ENCODE measurements at regions of chr10 and their contacts with region 1.

Region 1: GRCh38 chr10:71349401-71350110 is 30.5 kb downstream of the SLC29A3 start:
- DNase-seq: no peak
- H3K4me3 ChIP-seq: no peak overlapping the region
- H3K27ac ChIP-seq: no peak overlapping the region
- H3K4me1 ChIP-seq: no peaks in the 10 kb centered on the region
- H3K27me3 ChIP-seq: no peaks in the 10 kb centered on the region
- CTCF ChIP-seq: no peak
- EP300 ChIP-seq: no peak
- POLR2A ChIP-seq: no peak

Region 2: DNA sequence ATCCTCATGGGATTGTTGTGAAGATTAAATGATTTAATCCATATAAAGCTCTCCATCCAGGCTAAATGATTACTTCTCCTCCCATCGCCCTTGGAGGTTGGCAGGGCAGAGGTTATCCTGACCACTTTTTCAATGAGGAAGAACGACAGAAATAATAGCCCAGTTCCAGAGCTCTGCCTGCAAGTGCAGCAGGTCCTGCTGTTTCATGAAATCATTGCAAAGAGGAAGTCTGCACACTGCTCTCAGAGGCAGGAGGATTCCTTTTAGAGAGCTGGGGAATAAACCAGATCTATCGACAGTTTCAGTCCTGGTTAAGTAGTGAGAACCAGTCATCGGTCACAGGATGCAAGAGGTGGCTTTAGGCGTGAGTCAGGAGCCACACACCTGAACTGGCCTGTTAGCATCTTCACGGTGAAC is 22.2 kb after region 1 on chr10:
- intact Hi-C with region 1: loop called in 1 of 4 experiments (anchors 2 kb)
- DNase-seq: no peak
- H3K4me3 ChIP-seq: no peak overlapping the region
- H3K27ac ChIP-seq: no peak overlapping the region
- H3K4me1 ChIP-seq: peaks cover under 1% of the 10 kb centered on the region
- H3K27me3 ChIP-seq: no peaks in the 10 kb centered on the region
- CTCF ChIP-seq: no peak
- EP300 ChIP-seq: no peak
- POLR2A ChIP-seq: no peak

Region 3: GRCh38 chr10:71647526-71648253 is 298.1 kb after region 1 on chr10:
- intact Hi-C with region 1: no loop called
- DNase-seq: no peak
- H3K4me3 ChIP-seq: no peak overlapping the region
- H3K27ac ChIP-seq: no peak overlapping the region
- H3K4me1 ChIP-seq: no peaks in the 10 kb centered on the region
- H3K27me3 ChIP-seq: no peaks in the 10 kb centered on the region
- CTCF ChIP-seq: no peak
- EP300 ChIP-seq: no peak
- POLR2A ChIP-seq: no peak

Region 4: DNA sequence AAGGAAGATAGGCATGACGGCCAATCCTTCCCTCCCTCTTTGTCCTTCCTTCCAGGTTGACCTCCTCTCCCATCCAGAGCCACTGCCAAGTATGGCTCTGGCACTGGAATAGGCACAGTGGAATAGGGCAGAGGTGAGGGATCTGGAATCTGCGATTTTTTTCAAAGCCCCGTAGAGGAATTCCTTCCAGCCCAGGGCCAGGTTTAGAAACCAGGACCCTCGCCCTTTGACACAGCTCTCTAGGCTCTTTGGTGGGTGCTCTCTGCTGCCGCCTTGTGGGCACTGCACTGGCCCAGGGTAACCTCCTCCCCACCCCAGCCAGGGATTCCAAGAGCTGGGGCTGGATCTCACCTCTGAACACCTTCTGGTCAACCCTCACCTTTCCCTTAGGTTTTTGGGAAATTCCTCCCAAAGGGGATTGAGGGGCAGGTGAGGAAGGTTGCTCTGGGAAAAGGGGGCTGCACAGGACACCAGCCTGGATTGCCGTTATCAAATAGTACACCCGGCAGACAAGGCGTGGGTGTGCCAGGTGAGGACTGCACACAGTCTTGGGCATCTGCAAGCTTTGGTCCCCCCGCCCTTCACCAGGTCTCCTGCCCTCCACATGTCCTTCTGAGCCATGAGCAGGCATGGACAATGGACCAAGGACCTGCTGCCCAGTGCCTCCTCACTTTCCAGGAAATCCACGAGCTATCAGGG is 347.2 kb after region 1 on chr10:
- intact Hi-C with region 1: no loop called
- DNase-seq: peak; percentile 50 to 75 (median 68)
- H3K4me3 ChIP-seq: no peak overlapping the region
- H3K27ac ChIP-seq: no peak overlapping the region
- H3K4me1 ChIP-seq: no peaks in the 10 kb centered on the region
- H3K27me3 ChIP-seq: no peaks in the 10 kb centered on the region
- CTCF ChIP-seq: peak; percentile 46 to 71 (median 50)
- EP300 ChIP-seq: no peak
- POLR2A ChIP-seq: no peak